GM12878 (cell line): ENCODE measurements at regions of chr5 and their contacts with region 1.

Region 1: DNA sequence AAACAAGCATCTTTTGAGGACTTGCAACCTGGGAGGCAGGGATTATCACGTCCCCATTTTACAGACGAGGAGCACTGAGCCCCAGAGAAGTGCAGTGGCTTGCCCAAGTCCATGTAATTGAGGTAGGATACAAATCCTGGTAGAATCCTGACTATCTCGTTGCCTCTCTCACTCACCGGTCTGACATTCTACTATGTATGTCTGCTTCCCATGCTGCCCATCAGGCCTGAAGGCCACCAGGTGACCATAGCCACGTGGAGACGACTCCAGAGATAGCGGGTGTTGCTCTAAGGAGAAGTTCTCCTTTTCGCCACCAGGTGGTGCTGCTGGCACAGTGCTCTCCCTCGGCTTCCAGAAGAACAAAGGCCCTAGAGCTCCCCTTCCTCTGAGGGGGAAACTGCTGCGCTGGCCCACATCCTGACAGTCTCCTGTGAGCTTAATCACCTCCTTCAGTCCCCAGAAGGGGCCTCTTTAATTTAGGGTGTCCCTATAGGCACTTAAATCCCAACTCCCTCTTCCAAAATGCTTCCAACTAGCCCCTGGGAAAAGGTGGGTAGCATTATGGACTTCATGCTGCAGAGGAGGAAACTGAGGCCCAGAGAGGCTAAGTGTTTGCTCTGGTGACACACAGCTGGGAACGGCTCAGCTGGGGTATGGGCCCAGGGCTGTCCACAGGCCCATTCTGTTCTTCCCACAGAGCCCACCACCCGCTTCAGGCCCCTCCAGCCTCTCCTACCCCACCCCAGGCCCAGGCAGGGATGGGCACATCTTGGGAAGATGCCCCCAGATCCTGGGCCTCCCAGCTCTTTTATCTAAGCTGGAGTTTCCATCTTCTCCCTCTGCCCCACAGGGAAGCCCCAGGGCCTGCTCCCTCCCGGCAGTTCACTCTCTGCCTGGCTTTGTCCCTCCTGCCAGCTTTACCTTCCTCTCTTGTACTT is 6.4 kb downstream of the SLC34A1 start:
- DNase-seq: peak; percentile 74
- ATAC-seq: peak; percentile 89
- H3K4me3 ChIP-seq: no peak overlapping the region
- H3K27ac ChIP-seq: peak overlapping the region; percentile 67
- H3K4me1 ChIP-seq: peaks cover 26% of the 10 kb centered on the region
- H3K27me3 ChIP-seq: no peaks in the 10 kb centered on the region
- CTCF ChIP-seq: peak; percentile 91 to 97 (median 94)
- EP300 ChIP-seq: no peak; a peak in 1 of 4 replicates
- POLR2A ChIP-seq: no peak
- RAD21 ChIP-seq: peak; percentile 86

Region 2: DNA sequence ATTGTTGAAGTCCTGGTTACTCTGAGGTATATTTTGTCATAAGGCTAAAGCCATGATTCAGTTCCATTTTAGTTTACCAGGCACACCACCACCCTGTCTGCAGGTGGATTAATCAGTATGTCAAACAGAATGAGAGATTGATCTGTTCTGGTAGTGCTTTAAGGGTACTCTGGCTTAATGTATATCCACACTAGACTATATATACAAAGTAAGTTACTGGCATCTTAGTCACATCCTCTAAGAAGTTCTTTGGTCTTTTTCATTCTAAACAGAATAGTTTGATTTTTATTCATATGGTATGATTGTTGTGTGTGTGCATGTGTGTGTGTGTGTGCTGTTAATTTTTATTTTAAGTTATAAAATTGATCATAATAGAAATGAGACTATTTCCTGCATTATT is 148.9 kb before region 1 on chr5:
- CTCF ChIA-PET with region 1: no interaction called
- POLR2A ChIA-PET with region 1: no interaction called
- RAD21 ChIA-PET with region 1: no interaction called
- SMC1A ChIA-PET with region 1: no interaction called
- in situ Hi-C with region 1: no loop called
- intact Hi-C with region 1: no loop called
- DNase-seq: no peak
- ATAC-seq: no peak
- H3K4me3 ChIP-seq: no peak overlapping the region
- H3K27ac ChIP-seq: no peak overlapping the region
- H3K4me1 ChIP-seq: no peaks in the 10 kb centered on the region
- H3K27me3 ChIP-seq: no peaks in the 10 kb centered on the region
- CTCF ChIP-seq: no peak
- EP300 ChIP-seq: no peak
- POLR2A ChIP-seq: no peak
- RAD21 ChIP-seq: no peak

Region 3: DNA sequence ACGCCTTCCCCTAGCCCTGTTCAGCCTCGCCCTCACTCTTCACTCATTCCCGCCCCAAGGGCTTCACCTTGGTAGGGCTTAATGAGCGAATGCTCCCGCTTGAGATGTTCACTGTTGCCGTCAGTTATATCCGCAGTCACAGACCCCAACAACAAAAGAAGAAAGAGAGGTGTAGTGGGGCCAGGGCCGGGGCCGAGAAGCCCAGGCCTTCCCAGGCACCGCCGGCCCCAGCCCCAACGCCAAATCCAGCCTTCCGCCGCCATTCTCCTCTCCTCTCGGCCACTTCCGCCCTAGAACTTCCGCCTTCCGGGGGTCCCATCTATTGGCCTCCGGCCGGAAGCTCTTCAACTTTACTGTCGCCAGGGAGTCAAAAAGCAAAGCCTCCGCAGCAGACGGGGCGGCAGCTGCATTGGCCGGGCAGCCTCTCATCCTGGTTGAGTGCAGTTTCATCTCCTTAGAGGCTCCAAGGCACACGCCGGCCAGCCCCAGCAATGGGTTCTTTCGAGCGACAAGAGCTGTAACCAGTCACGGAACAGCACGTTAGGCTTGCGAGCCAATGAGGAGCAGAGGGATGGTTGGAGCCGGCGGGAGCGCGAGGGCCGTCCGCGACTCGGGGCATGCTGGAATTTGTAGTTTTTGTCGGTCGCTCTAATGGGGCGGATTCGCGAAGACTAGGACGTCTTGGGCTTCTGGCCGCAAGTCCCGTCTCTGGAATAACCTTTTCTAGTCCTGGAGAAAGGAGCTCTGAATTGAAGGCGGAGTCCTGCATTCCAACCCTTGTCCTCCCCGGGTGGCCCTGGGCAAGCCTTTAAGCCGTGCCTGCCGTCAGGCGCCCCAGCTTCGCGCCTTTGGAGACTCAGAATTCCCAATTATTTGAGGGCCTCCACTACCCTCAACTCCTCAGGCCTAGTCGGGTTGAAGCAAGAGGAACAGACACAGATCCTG is 39.0 kb before region 1 on chr5 and contains the start of gene LMAN2:
- CTCF ChIA-PET with region 1: interaction called, 46 read pairs
- POLR2A ChIA-PET with region 1: interaction called, 5 read pairs
- RAD21 ChIA-PET with region 1: interaction called, 20 read pairs
- SMC1A ChIA-PET with region 1: interaction called, 20 read pairs
- in situ Hi-C with region 1: no loop called
- intact Hi-C with region 1: no loop called
- DNase-seq: peak; percentile 93
- ATAC-seq: peak; percentile 99
- H3K4me3 ChIP-seq: peak within 1 kb of the TSS; percentile 98
- H3K27ac ChIP-seq: peak within 1 kb of the TSS; percentile 89
- H3K4me1 ChIP-seq: peaks cover 21% of the 10 kb centered on the region
- H3K27me3 ChIP-seq: no peaks in the 10 kb centered on the region
- CTCF ChIP-seq: no peak
- EP300 ChIP-seq: no peak
- POLR2A ChIP-seq: peak; percentile 88
- RAD21 ChIP-seq: no peak
- polyA plus RNA-seq, gene LMAN2: 2.4 to 11.4 TPM

Region 4: DNA sequence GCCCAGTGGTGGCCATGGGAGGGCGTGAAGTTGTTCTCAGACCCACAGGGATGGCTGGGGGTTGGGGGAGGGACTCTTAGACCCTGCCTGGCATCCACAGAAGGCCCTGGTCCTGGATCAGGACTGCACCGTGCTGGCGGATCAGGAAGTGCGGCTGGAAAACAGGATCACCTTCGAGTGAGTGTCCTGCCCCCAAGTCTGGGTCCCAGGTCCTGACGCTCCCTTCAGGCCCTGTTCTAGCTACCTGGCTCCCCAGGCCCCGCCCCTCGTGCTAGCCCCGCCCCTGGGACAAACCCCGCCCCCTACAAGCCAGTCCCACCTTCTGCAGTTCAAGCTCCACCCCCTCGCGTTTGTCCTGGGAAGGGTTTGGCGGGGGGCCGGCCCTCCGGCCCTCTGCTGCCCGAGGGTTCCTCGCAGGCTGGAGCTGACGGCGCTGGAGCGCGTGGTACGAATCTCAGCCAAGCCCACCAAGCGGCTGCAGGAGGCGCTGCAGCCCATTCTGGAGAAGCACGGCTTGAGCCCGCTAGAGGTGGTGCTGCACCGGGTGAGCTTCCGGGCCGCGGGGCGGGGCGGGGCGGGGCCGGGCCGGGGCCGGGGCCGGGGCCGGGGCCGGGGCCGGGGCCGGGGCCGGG is 20.0 kb before region 1 on chr5:
- CTCF ChIA-PET with region 1: interaction called, 88 read pairs
- POLR2A ChIA-PET with region 1: interaction called, 9 read pairs
- RAD21 ChIA-PET with region 1: interaction called, 46 read pairs
- SMC1A ChIA-PET with region 1: interaction called, 32 read pairs
- in situ Hi-C with region 1: no loop called
- intact Hi-C with region 1: no loop called
- DNase-seq: no peak
- ATAC-seq: peak; percentile 87
- H3K4me3 ChIP-seq: no peak overlapping the region
- H3K27ac ChIP-seq: no peak overlapping the region
- H3K4me1 ChIP-seq: peaks cover 28% of the 10 kb centered on the region
- H3K27me3 ChIP-seq: no peaks in the 10 kb centered on the region
- CTCF ChIP-seq: peak; percentile 9 to 52 (median 45); a peak in 4 of 6 replicates
- EP300 ChIP-seq: no peak
- POLR2A ChIP-seq: no peak
- RAD21 ChIP-seq: no peak

Region 5: DNA sequence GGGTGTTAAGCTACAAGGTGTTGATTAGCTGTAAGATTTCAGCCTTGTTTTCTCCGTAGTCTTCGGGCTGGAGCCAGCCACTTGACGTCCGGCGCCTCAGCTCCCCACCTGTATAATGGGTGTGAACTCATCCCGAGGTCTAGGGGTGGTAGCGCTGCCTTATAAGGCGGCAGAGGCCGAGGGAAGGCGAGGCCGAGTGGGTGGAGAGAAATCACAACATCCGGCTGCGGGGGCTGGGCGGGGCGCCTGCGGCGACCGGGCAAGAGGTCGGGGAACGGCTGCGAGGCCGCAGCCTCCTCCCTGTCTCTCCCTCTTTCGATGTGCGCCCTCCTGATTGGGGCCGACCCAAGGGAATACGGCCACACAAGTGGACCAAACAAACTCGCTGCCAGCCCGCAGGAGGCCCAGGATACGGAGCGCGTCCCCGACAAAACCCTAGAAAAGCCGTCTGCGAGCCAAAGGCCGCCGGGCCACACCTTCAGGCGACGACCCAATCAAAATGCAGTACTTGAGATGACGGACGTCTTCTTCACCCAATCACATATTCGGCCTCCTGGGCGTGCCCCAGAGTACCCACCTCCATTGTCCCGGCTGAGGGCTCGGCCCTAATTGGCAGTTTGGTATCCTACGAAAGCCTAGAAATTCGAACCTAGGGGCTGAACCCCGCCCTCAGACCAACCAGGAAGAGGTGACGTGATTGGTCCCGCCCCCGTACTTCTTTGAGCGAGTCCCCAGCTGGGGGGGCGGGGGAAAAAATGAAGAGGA is 35.4 kb after region 1 on chr5:
- CTCF ChIA-PET with region 1: interaction called, 25 read pairs
- POLR2A ChIA-PET with region 1: interaction called, 13 read pairs
- RAD21 ChIA-PET with region 1: interaction called, 38 read pairs
- SMC1A ChIA-PET with region 1: interaction called, 22 read pairs
- in situ Hi-C with region 1: no loop called
- intact Hi-C with region 1: no loop called
- DNase-seq: peak; percentile 100
- ATAC-seq: peak; percentile 81
- H3K4me3 ChIP-seq: peak overlapping the region; percentile 62; the same call in 1 of the 2 replicates
- H3K27ac ChIP-seq: peak overlapping the region; percentile 99
- H3K4me1 ChIP-seq: peaks cover 37% of the 10 kb centered on the region
- H3K27me3 ChIP-seq: no peaks in the 10 kb centered on the region
- CTCF ChIP-seq: no peak
- EP300 ChIP-seq: peak in 1 of 2 experiments; percentile 43; a peak in 1 of 4 replicates
- POLR2A ChIP-seq: no peak
- RAD21 ChIP-seq: no peak

Region 6: DNA sequence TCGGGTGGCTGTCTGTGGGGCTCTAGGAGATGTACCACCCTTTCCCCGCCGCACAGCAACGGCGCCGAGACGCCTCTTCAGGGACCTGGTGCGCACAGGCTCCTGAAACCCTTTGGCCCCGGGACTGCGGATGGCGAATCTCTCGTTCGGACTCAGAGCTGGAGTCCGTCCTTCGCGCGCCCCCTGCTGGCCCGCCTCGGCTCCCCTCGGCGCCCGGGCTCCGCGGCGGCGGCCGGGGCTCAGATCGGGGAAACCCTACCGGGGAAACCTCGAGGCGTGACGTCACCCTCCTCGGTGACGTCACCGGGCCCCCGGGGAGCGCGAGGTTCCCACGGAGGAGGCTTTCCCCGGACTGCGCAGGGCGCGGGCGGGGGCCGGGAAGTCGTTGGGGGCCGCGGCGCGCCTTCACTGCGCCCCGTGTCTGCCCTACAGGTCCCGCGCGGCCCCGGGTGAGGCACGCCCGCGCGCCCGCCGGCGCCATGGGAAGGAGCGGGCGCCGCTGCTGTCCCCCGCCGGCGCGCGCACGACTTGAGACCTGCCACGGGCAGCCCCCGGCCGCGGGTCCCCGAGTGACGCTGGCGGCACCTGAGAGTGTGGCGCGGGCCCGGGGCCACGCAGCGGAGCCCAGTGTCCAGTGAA is 63.9 kb after region 1 on chr5:
- CTCF ChIA-PET with region 1: interaction called, 120 read pairs
- POLR2A ChIA-PET with region 1: interaction called, 30 read pairs
- RAD21 ChIA-PET with region 1: interaction called, 108 read pairs
- SMC1A ChIA-PET with region 1: interaction called, 44 read pairs
- in situ Hi-C with region 1: no loop called
- intact Hi-C with region 1: loop called (anchors 1 kb)
- DNase-seq: no peak
- ATAC-seq: peak; percentile 68
- H3K4me3 ChIP-seq: peak overlapping the region; percentile 82
- H3K27ac ChIP-seq: peak overlapping the region; percentile 67
- H3K4me1 ChIP-seq: peaks cover 11% of the 10 kb centered on the region
- H3K27me3 ChIP-seq: no peaks in the 10 kb centered on the region
- CTCF ChIP-seq: peak; percentile 79 to 98 (median 87); a peak in 4 of 6 replicates
- EP300 ChIP-seq: peak; percentile 39 to 70; a peak in 3 of 4 replicates
- POLR2A ChIP-seq: no peak
- RAD21 ChIP-seq: peak; percentile 84

Region 7: GRCh38 chr5:177516604-177517568 is 126.3 kb after region 1 on chr5 and contains the start of gene DDX41:
- CTCF ChIA-PET with region 1: no interaction called
- POLR2A ChIA-PET with region 1: no interaction called
- RAD21 ChIA-PET with region 1: no interaction called
- SMC1A ChIA-PET with region 1: no interaction called
- in situ Hi-C with region 1: no loop called
- intact Hi-C with region 1: no loop called
- DNase-seq: peak; percentile 90
- ATAC-seq: peak; percentile 92
- H3K4me3 ChIP-seq: peak within 1 kb of the TSS; percentile 77
- H3K27ac ChIP-seq: peak within 1 kb of the TSS; percentile 66
- H3K4me1 ChIP-seq: peaks cover 12% of the 10 kb centered on the region
- H3K27me3 ChIP-seq: no peaks in the 10 kb centered on the region
- CTCF ChIP-seq: no peak
- EP300 ChIP-seq: no peak
- POLR2A ChIP-seq: no peak
- RAD21 ChIP-seq: no peak
- polyA plus RNA-seq, gene DDX41: 32.7 to 67.6 TPM

Region 8: DNA sequence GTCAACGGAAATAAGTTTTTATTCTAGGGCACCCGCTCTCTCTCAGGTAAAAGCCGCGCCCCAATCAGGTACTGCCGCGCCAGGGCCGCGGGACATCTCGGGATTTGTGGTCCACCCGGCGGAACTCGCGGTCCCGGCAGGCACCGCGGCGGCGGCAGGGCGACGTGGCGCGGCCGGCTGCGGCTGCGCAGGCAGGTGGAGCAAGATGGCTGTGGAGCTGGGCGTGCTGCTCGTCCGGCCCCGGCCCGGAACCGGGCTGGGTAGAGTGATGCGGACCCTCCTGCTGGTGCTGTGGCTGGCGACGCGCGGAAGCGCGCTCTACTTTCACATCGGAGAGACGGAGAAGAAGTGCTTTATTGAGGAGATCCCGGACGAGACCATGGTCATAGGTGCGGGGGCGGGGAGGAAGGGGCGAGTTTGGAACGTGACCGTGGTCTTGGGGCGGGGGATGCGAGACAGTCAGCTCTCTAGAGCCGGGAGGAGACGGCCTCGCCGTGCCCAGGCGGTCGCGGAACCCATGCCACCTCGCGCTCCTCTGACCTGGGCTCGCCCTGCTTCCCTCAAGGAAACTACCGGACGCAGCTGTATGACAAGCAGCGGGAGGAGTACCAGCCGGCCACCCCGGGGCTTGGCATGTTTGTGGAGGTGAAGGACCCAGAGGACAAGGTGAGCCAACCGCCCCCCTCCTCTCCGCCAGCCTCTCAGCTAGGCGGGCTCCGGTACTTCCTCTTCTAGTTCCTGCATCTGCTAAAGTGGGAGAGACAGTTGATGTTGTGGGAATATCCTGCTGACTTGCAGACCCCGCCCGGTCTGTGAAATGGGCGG is 201.6 kb after region 1 on chr5 and contains the start of gene TMED9:
- CTCF ChIA-PET with region 1: interaction called, 4 read pairs
- POLR2A ChIA-PET with region 1: no interaction called
- RAD21 ChIA-PET with region 1: no interaction called
- SMC1A ChIA-PET with region 1: no interaction called
- in situ Hi-C with region 1: no loop called
- intact Hi-C with region 1: loop called (anchors 5 kb)
- DNase-seq: no peak
- ATAC-seq: peak; percentile 99
- H3K4me3 ChIP-seq: peak within 1 kb of the TSS; percentile 88
- H3K27ac ChIP-seq: peak within 1 kb of the TSS; percentile 85
- H3K4me1 ChIP-seq: peaks cover 8% of the 10 kb centered on the region
- H3K27me3 ChIP-seq: no peaks in the 10 kb centered on the region
- CTCF ChIP-seq: no peak; a peak in 1 of 6 replicates
- EP300 ChIP-seq: no peak
- POLR2A ChIP-seq: peak; percentile 98
- RAD21 ChIP-seq: no peak
- polyA plus RNA-seq, gene TMED9: 35.7 to 46.6 TPM